ENCODE measurements at regions of chr1 and their contacts with region 1.

Region 1: DNA sequence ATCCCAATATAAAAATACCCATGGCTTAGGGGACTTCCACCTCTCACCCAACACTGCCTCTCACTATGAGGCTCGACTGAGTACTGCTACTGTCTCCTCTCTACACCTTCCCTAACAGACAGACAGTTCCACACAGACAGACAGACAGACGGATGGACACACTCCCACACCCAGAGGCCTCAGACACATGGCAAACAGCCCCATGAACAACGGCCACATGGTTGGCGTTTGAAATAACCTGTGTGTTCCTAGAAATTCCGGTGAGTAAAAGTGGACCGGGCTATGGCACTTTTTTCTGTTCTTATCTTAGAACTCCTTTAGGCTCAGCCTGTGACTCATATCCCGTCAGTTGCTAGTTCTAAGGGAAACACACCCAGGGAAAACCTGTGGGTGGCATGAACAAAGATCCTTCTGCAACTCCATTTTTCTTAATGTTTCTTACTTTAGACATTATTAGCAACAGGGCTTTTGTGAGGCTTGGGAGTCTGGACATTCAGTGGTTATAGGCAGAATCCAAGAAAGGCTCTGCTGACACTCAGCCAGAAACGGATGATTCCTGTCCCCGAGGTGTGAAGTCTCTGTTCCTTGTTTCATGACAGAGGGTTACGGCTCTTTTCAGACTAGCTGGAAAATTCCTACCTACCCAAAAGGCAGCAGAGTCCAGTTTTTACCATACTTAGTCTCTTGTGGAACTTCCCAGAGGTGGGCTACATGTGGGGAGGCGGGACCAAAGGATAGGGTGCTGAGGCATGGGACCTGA is 90.5 kb upstream of the TLR5 start:
- DNase-seq: peak; percentile 51 to 65
- H3K4me3 ChIP-seq: no peak overlapping the region
- H3K27ac ChIP-seq: peak overlapping the region; percentile 38
- H3K4me1 ChIP-seq: peaks cover 26% of the 10 kb centered on the region
- H3K27me3 ChIP-seq: no peaks in the 10 kb centered on the region
- CTCF ChIP-seq: no peak

Region 2: DNA sequence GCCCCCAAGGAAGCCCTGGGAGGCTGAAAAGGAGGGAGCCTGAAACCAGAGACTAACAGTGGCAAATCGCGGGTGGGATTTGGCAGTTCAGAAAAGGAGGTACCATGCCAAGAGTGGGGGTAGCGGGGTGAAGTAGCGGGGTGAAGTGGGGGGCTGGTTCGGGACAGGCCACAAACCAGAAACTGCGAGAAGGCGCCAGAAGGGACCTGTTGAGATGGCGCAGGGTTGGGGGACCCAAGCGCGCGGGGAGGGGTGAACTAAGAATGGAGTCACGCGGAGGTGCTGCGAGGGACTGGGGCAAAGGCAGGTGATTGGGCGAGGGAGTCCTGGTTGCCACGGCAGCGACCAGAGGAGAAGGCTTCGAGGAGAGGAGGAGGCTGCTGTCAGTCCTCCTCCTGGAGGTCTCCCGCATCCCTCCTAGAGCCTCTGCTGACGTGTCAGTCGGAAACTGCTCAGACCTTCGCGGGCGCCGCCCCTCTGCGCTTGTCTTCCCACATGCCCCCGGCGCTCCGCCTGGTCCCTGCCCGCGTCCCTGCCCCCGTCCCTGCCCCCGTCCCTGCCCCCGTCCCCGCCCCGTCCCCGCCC is 616.1 kb before region 1 on chr1:
- CTCF ChIA-PET with region 1: no interaction called
- POLR2A ChIA-PET with region 1: interaction called, 13 read pairs
- intact Hi-C with region 1: no loop called
- DNase-seq: peak; percentile 88 to 90
- H3K4me3 ChIP-seq: peak overlapping the region; percentile 43; the same call in 1 of the 2 replicates
- H3K27ac ChIP-seq: 0 out of 2 replicates have a peak overlapping the region, but pooled peaks have one; percentile 14
- H3K4me1 ChIP-seq: peaks cover 6% of the 10 kb centered on the region
- H3K27me3 ChIP-seq: no peaks in the 10 kb centered on the region
- CTCF ChIP-seq: no peak

Region 3: DNA sequence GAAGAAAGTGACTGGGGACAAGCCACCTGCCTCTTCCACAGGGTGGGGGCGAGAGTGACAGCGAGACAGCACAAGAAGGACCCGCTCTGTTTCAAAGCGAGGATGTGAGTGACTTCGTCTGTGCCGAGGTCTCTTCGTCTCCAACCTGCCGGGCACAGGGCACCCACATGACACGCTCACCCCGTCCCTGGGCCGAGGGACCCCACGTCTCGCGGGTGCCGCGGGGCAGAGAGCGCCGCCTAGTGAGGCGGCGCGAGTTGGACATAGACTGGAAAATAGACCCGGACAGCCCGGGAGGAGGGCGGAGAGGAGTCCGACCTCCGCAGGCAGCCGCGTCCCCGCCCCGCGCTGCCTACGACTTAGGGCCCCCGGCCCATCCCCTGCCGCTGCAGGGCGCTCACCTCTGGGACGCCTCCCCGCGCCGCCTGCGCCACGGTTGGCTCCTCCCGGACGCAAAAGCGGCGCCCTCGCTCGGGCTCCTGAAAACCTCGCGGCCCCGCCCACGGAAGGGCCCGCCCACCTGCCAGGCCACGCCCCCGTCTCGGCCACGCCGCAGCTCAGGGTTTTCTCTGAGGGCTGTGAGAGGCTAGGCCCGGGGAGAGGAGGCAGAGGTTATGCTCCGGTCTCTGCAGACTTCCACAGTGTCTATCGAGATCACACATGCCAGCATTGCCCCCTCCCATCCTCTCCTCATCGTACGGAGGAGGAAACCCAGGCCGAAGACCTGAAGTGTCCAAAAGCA is 90.6 kb before region 1 on chr1 and contains the start of gene TLR5:
- CTCF ChIA-PET with region 1: interaction called, 3 read pairs
- POLR2A ChIA-PET with region 1: interaction called, 4 read pairs
- intact Hi-C with region 1: loop called (anchors 1 kb)
- DNase-seq: peak; percentile 76 to 88
- H3K4me3 ChIP-seq: peak within 1 kb of the TSS; percentile 61
- H3K27ac ChIP-seq: no peak within 1 kb of the TSS
- H3K4me1 ChIP-seq: peaks cover 15% of the 10 kb centered on the region; the same call in 1 of the 2 replicates
- H3K27me3 ChIP-seq: no peaks in the 10 kb centered on the region
- CTCF ChIP-seq: peak; percentile 83
- total RNA-seq, gene TLR5: 2.5 and 3.4 TPM in 2 replicates

Region 4: GRCh38 chr1:223189903-223190724 is 43.5 kb before region 1 on chr1:
- CTCF ChIA-PET with region 1: no interaction called
- POLR2A ChIA-PET with region 1: no interaction called
- intact Hi-C with region 1: loop called (anchors 10 kb)
- DNase-seq: peak; percentile 46 to 92
- H3K4me3 ChIP-seq: no peak overlapping the region
- H3K27ac ChIP-seq: peak overlapping the region; percentile 70
- H3K4me1 ChIP-seq: peaks cover 29% of the 10 kb centered on the region
- H3K27me3 ChIP-seq: no peaks in the 10 kb centered on the region
- CTCF ChIP-seq: no peak

Region 5: GRCh38 chr1:223207293-223208066 is 26.1 kb before region 1 on chr1:
- CTCF ChIA-PET with region 1: no interaction called
- POLR2A ChIA-PET with region 1: interaction called, 12 read pairs
- intact Hi-C with region 1: no loop called
- DNase-seq: no peak
- H3K4me3 ChIP-seq: no peak overlapping the region
- H3K27ac ChIP-seq: no peak overlapping the region
- H3K4me1 ChIP-seq: no peaks in the 10 kb centered on the region
- H3K27me3 ChIP-seq: no peaks in the 10 kb centered on the region
- CTCF ChIP-seq: no peak

Measured in PC-9 (cell line).